HepG2 (cell line): ENCODE measurements at regions of chr20 and their contacts with region 1.

Region 1: DNA sequence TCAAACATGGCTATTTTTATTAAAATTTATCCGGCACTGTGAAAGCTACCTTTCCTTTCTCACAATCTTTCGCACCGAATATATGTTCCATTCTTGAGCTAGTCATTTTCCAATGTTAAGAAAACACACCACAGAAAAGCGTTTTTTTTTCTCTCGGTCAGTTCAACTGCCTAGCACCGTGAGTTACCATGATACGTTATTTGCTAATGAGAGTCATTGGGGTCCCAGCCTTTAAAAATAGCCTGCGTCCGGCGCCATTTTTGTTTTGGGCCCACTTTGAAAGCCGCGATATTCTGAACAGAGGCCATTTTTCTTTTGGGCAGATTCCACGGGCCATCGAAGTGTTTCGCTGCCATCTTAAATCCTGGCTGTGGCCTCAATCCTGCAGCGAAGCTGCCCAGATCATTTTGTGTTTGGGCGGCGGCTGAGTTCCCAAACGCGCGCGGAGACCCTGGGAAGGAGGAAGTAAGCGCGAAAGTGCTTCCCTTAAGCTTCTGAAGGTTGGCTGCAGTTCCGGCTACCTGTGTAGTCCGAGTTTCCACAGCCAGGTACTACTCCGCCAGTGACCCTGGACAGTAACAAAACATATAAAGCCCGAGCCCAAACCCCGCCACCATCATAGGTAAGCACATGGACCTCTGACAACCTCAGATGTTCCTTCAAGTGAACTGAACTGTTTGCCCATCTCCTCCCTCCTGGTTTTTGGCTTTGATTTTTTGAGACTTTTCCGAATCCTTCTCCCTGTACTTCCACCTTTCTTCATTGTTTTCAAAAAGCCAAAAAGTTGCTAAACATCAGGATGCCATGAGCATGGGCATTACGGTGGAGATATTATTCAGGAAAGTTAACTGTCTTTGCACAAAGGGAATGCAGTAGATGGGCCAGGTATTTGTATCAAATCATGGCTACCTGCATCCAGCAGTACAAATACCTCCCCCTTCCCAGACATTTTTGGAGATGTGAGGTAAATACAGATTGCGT is at the start of gene SLX4IP:
- DNase-seq: peak; percentile 99
- ATAC-seq: peak; percentile 80
- H3K4me3 ChIP-seq: peak within 1 kb of the TSS; percentile 80 to 91 (median 90)
- H3K27ac ChIP-seq: peak within 1 kb of the TSS; percentile 85
- H3K4me1 ChIP-seq: peaks cover 51% of the 10 kb centered on the region
- H3K27me3 ChIP-seq: no peaks in the 10 kb centered on the region; a peak in 1 of 5 replicates
- CTCF ChIP-seq: peak; percentile 11; the same call in 1 of the 2 replicates
- EP300 ChIP-seq: peak in 1 of 2 experiments; percentile 37; a peak in 3 of 4 replicates
- POLR2A ChIP-seq: peak; percentile 72 to 92
- RAD21 ChIP-seq: peak; percentile 8; the same call in 1 of the 2 replicates
- total RNA-seq, gene SLX4IP: 7.3 and 9.5 TPM in 2 replicates

Region 2: GRCh38 chr20:10347086-10347880 is 87.8 kb before region 1 on chr20:
- CTCF ChIA-PET with region 1: no interaction called
- POLR2A ChIA-PET with region 1: interaction called, 16 read pairs
- in situ Hi-C with region 1: no loop called
- intact Hi-C with region 1: no loop called
- DNase-seq: no peak
- ATAC-seq: no peak
- H3K4me3 ChIP-seq: no peak overlapping the region
- H3K27ac ChIP-seq: peak overlapping the region; percentile 30
- H3K4me1 ChIP-seq: peaks cover 52% of the 10 kb centered on the region
- H3K27me3 ChIP-seq: no peaks in the 10 kb centered on the region
- CTCF ChIP-seq: no peak
- EP300 ChIP-seq: no peak; a peak in 1 of 4 replicates
- POLR2A ChIP-seq: no peak
- RAD21 ChIP-seq: no peak

Region 3: GRCh38 chr20:10504994-10505730 is 70.0 kb after region 1 on chr20:
- CTCF ChIA-PET with region 1: no interaction called
- POLR2A ChIA-PET with region 1: interaction called, 10 read pairs
- in situ Hi-C with region 1: no loop called
- intact Hi-C with region 1: no loop called
- DNase-seq: no peak
- ATAC-seq: no peak
- H3K4me3 ChIP-seq: no peak overlapping the region
- H3K27ac ChIP-seq: no peak overlapping the region
- H3K4me1 ChIP-seq: peaks cover 16% of the 10 kb centered on the region
- H3K27me3 ChIP-seq: no peaks in the 10 kb centered on the region
- CTCF ChIP-seq: no peak
- EP300 ChIP-seq: no peak
- POLR2A ChIP-seq: no peak
- RAD21 ChIP-seq: no peak

Region 4: GRCh38 chr20:10547276-10548114 is 112.4 kb after region 1 on chr20:
- CTCF ChIA-PET with region 1: no interaction called
- POLR2A ChIA-PET with region 1: interaction called, 13 read pairs
- in situ Hi-C with region 1: loop called (anchors 5 kb)
- intact Hi-C with region 1: no loop called
- DNase-seq: no peak
- ATAC-seq: peak; percentile 75
- H3K4me3 ChIP-seq: no peak overlapping the region
- H3K27ac ChIP-seq: peak overlapping the region; percentile 42
- H3K4me1 ChIP-seq: peaks cover 65% of the 10 kb centered on the region
- H3K27me3 ChIP-seq: no peaks in the 10 kb centered on the region
- CTCF ChIP-seq: peak; percentile 32
- EP300 ChIP-seq: no peak
- POLR2A ChIP-seq: no peak
- RAD21 ChIP-seq: no peak

Region 5: DNA sequence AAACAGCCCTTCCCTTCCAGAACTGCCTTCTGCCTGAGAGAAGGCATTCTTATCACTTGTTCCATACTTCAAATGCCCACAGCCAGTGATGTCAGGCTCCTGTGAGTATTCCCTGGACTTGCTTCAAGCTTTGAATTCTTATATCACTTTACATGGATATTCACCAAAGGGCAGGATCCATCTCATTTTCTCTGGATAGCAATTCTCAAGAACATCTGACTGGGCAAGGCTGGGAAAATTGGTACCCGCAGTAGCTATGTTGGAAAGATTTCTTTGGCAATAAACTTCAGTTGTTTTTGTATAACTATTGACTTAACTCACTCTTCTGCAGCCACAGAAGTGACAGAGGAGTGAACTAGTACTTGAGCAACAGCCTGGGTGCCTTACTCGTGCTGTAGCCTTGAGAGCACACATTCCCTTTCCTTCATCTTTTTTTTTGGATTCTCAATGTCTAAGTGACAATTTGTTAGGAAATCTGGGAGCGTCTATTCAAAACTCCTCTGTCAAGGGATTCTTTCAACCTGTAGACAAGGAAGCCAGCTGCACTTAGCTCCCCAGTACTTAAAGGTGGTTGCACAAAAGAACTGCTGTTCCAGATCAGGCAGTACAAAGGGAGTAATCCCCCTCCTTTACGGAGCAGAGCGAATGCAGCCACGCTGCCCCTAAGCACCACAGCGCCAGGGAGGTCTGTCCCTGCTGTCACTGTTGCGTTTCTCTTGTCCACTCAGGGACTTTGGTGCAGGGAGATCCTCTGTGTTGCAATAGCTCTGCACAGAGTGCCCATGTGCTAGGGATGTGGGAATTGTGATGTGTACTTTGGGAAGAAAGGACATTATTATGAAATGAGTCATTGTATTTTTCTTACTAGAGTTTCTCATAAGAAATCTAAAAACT is 169.1 kb after region 1 on chr20:
- CTCF ChIA-PET with region 1: no interaction called
- POLR2A ChIA-PET with region 1: interaction called, 13 read pairs
- in situ Hi-C with region 1: no loop called
- intact Hi-C with region 1: no loop called
- DNase-seq: peak; percentile 99
- ATAC-seq: peak; percentile 100
- H3K4me3 ChIP-seq: peak overlapping the region; percentile 6 to 54 (median 9); a peak in 3 of 6 replicates
- H3K27ac ChIP-seq: peak overlapping the region; percentile 76
- H3K4me1 ChIP-seq: peaks cover 31% of the 10 kb centered on the region
- H3K27me3 ChIP-seq: no peaks in the 10 kb centered on the region
- CTCF ChIP-seq: peak; percentile 61
- EP300 ChIP-seq: peak; percentile 87 to 97; a peak in 3 of 4 replicates
- POLR2A ChIP-seq: peak; percentile 62 to 83
- RAD21 ChIP-seq: peak; percentile 60; the same call in 1 of the 2 replicates

Region 6: GRCh38 chr20:10673988-10674711 is 239.0 kb after region 1 on chr20 and contains the start of gene JAG1:
- CTCF ChIA-PET with region 1: no interaction called
- POLR2A ChIA-PET with region 1: interaction called, 46 read pairs
- in situ Hi-C with region 1: no loop called
- intact Hi-C with region 1: loop called (anchors 1 kb)
- DNase-seq: peak; percentile 97
- ATAC-seq: peak; percentile 77
- H3K4me3 ChIP-seq: peak within 1 kb of the TSS; percentile 85 to 94 (median 91)
- H3K27ac ChIP-seq: peak within 1 kb of the TSS; percentile 89
- H3K4me1 ChIP-seq: peaks cover 37% of the 10 kb centered on the region
- H3K27me3 ChIP-seq: no peaks in the 10 kb centered on the region; a peak in 1 of 5 replicates
- CTCF ChIP-seq: peak; percentile 22; the same call in 1 of the 2 replicates
- EP300 ChIP-seq: peak in 1 of 2 experiments; percentile 46; a peak in 1 of 4 replicates
- POLR2A ChIP-seq: peak; percentile 82 to 85
- RAD21 ChIP-seq: peak; percentile 66
- total RNA-seq, gene JAG1: 18.1 and 56.3 TPM in 2 replicates

Region 7: DNA sequence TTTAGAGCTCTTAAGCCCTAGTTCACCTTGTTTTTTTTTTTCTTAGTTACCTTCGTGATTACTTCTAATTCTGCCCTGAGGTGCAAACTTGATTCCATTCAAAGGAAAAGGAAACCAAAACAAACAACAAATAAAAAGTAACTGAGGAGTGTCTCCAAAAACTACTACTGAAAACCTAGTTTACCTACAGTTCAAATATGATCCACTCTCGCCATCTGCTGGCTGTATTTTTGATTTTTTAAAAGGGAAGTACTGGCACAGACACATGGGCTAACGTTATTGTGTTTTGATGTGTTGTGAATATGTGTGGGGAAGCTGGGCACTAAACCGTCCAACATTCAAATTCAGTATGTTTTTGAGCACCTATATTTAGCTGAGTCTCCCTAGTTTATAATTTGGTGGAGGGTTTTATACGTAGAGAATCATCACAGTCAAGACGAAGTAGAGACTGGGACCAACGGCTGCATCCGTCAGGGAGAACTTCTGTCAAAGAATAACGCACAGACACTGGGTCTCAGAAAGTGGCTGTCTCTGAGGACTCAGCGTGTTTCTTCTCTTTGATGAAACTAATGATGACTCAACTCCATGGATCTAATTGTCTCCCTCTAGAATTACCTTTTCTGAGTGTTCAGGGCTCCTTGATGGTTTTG is 1109.0 kb after region 1 on chr20:
- CTCF ChIA-PET with region 1: no interaction called
- POLR2A ChIA-PET with region 1: no interaction called
- in situ Hi-C with region 1: loop called (anchors 25 kb)
- intact Hi-C with region 1: no loop called
- DNase-seq: peak; percentile 72
- ATAC-seq: peak; percentile 88
- H3K4me3 ChIP-seq: no peak overlapping the region
- H3K27ac ChIP-seq: no peak overlapping the region
- H3K4me1 ChIP-seq: peaks cover 12% of the 10 kb centered on the region
- H3K27me3 ChIP-seq: no peaks in the 10 kb centered on the region; a peak in 1 of 5 replicates
- CTCF ChIP-seq: peak; percentile 85
- EP300 ChIP-seq: no peak
- POLR2A ChIP-seq: no peak
- RAD21 ChIP-seq: peak; percentile 41; the same call in 1 of the 2 replicates